ENCODE measurements at regions of chr1 and their contacts with region 1.

Region 1: GRCh38 chr1:27357281-27358037 is 9.3 kb downstream of the MAP3K6 start:
- DNase-seq: peak; percentile 73 to 94
- H3K4me3 ChIP-seq: peak overlapping the region in 3 of 4 experiments; percentile 13 to 34 (median 28); a peak in 4 of 8 replicates
- H3K27ac ChIP-seq: no peak overlapping the region
- H3K4me1 ChIP-seq: peaks cover 0 to 14% (median 7%) of the 10 kb centered on the region in 4 experiments; a peak in 6 of 7 replicates
- H3K27me3 ChIP-seq: peaks cover 12 to 47% (median 36%) of the 10 kb centered on the region in 4 experiments
- CTCF ChIP-seq: peak in 2 of 3 experiments; percentile 94 to 98; a peak in 3 of 4 replicates
- EP300 ChIP-seq: no peak; a peak in 1 of 3 replicates
- POLR2A ChIP-seq: no peak
- RAD21 ChIP-seq: peak; percentile 60 to 71

Region 2: GRCh38 chr1:27285274-27285660 is 72.2 kb before region 1 on chr1:
- CTCF ChIA-PET with region 1: no interaction called
- POLR2A ChIA-PET with region 1: no interaction called
- DNase-seq: no peak
- H3K4me3 ChIP-seq: no peak overlapping the region
- H3K27ac ChIP-seq: no peak overlapping the region
- H3K4me1 ChIP-seq: no peaks in the 10 kb centered on the region
- H3K27me3 ChIP-seq: no peaks in the 10 kb centered on the region
- CTCF ChIP-seq: no peak
- EP300 ChIP-seq: no peak
- POLR2A ChIP-seq: no peak
- RAD21 ChIP-seq: no peak

Region 3: DNA sequence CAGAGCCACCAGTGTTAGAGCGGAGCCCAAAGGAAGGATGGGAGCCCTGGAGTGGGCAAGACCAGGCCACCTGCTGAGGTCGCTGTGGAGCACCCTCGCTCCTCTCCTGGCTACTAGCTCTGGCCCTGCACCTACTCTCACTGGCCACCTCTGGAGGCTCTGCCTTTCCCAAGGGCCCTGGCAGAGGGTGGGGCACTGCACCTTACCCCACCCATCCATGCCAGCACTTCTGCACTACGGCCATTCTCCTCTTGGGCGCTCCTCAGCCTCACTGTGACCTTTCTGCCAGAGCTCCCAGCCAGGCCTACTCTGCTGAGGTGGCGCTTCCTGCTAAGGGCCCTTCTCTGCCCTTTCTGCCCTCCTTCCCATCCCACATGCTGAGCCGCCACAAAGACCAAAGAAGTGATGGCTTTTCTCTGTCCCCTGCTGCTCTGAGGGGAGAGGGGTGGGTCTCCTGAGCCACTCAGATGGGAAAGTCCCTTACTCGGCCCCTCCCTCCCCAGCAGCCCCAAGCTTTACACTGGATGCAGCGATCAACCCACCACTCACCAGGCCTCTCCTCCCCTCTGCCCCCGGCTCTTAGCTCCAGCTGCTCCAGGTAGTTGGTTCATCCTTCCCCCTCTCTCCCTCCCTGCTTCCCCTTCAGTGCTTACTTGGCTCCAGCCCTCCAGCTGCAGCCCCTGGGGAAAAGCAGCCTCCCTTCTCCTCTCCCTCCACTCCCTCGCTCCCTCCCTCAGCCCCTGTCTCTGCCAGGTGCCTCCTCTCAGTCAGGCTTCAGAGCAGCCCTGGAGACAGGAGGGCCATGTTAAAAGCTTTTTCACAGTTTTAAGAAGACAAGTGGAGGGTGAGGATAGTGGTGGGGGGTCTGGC is 50.3 kb before region 1 on chr1:
- CTCF ChIA-PET with region 1: interaction called, 238 read pairs
- POLR2A ChIA-PET with region 1: interaction called, 6 read pairs
- DNase-seq: peak in 1 of 2 experiments; percentile 76
- H3K4me3 ChIP-seq: peak overlapping the region in 2 of 4 experiments; percentile 23 to 39; a peak in 4 of 8 replicates
- H3K27ac ChIP-seq: peak overlapping the region; percentile 57; the same call in 1 of the 2 replicates
- H3K4me1 ChIP-seq: peaks cover 11 to 15% (median 13%) of the 10 kb centered on the region in 4 experiments
- H3K27me3 ChIP-seq: no peaks in the 10 kb centered on the region
- CTCF ChIP-seq: peak; percentile 33 to 57 (median 41)
- EP300 ChIP-seq: no peak
- POLR2A ChIP-seq: 0 out of 3 replicates have a peak, but pooled peaks of 1 of the 2 experiments have one; percentile 28
- RAD21 ChIP-seq: 0 out of 4 replicates have a peak, but pooled peaks of 1 of the 2 experiments have one; percentile 12

Region 4: GRCh38 chr1:27321813-27322577 is 35.5 kb before region 1 on chr1 and contains the start of gene TMEM222:
- CTCF ChIA-PET with region 1: interaction called, 26 read pairs
- POLR2A ChIA-PET with region 1: interaction called, 13 read pairs
- DNase-seq: peak; percentile 88 to 99
- H3K4me3 ChIP-seq: peak within 1 kb of the TSS; percentile 78 to 100 (median 98)
- H3K27ac ChIP-seq: peak within 1 kb of the TSS; percentile 86
- H3K4me1 ChIP-seq: 0 out of 7 replicates have a peak, but pooled peaks cover 0 to 8% (median 0%) of the 10 kb centered on the region in 4 experiments
- H3K27me3 ChIP-seq: no peaks in the 10 kb centered on the region; a peak in 2 of 7 replicates
- CTCF ChIP-seq: peak in 2 of 3 experiments; percentile 1 to 14; a peak in 2 of 4 replicates
- EP300 ChIP-seq: peak; percentile 16 to 83; a peak in 2 of 3 replicates
- POLR2A ChIP-seq: peak; percentile 69 to 87
- RAD21 ChIP-seq: peak; percentile 7 to 30; a peak in 3 of 4 replicates
- total RNA-seq, gene TMEM222: 25.1 and 27.0 TPM in 2 replicates

Region 5: GRCh38 chr1:27341525-27342252 is 15.8 kb before region 1 on chr1 and contains the start of gene SYTL1:
- CTCF ChIA-PET with region 1: interaction called, 56 read pairs
- POLR2A ChIA-PET with region 1: interaction called, 50 read pairs
- DNase-seq: peak in 1 of 2 experiments; percentile 73
- H3K4me3 ChIP-seq: peak within 1 kb of the TSS; percentile 16 to 64 (median 44)
- H3K27ac ChIP-seq: no peak within 1 kb of the TSS
- H3K4me1 ChIP-seq: peaks cover 0 to 25% (median 20%) of the 10 kb centered on the region in 4 experiments; a peak in 6 of 7 replicates
- H3K27me3 ChIP-seq: peaks cover 0 to 2% (median 0%) of the 10 kb centered on the region in 4 experiments; a peak in 1 of 7 replicates
- CTCF ChIP-seq: no peak
- EP300 ChIP-seq: no peak
- POLR2A ChIP-seq: no peak
- RAD21 ChIP-seq: no peak
- total RNA-seq, gene SYTL1: 6.4 and 8.8 TPM in 2 replicates

Region 6: GRCh38 chr1:27445177-27445936 is 87.9 kb after region 1 on chr1:
- CTCF ChIA-PET with region 1: no interaction called
- POLR2A ChIA-PET with region 1: no interaction called
- DNase-seq: no peak
- H3K4me3 ChIP-seq: no peak overlapping the region
- H3K27ac ChIP-seq: no peak overlapping the region
- H3K4me1 ChIP-seq: peaks cover 0 to 3% (median 0%) of the 10 kb centered on the region in 4 experiments; a peak in 1 of 7 replicates
- H3K27me3 ChIP-seq: no peaks in the 10 kb centered on the region
- CTCF ChIP-seq: no peak
- EP300 ChIP-seq: no peak
- POLR2A ChIP-seq: no peak
- RAD21 ChIP-seq: no peak

Region 7: DNA sequence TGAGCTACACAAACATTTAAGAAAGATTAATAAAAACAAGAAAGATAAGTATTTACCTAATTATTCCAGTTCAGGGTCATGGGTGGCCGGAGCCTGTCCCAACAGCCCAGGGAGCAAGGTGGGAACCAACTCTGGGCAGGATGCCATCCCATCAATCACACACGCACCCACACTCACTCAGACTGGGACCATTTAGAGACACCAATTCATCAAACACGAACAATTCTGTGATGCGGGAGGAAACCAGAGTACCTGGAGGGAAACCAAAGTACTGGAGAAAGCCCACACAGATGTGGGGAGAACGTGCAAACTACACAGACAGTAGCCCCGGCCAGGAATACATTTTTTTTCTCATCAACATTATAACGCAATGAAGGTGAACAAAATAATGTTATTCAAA is 116.3 kb after region 1 on chr1:
- CTCF ChIA-PET with region 1: no interaction called
- POLR2A ChIA-PET with region 1: no interaction called
- DNase-seq: no peak
- H3K4me3 ChIP-seq: no peak overlapping the region
- H3K27ac ChIP-seq: no peak overlapping the region
- H3K4me1 ChIP-seq: no peaks in the 10 kb centered on the region; a peak in 1 of 7 replicates
- H3K27me3 ChIP-seq: no peaks in the 10 kb centered on the region
- CTCF ChIP-seq: no peak
- EP300 ChIP-seq: no peak
- POLR2A ChIP-seq: no peak
- RAD21 ChIP-seq: no peak

Region 8: GRCh38 chr1:27525296-27526272 is 168.1 kb after region 1 on chr1:
- CTCF ChIA-PET with region 1: no interaction called
- POLR2A ChIA-PET with region 1: no interaction called
- DNase-seq: peak in 1 of 2 experiments; percentile 81
- H3K4me3 ChIP-seq: peak overlapping the region in 3 of 4 experiments; percentile 15 to 42 (median 34); a peak in 4 of 8 replicates
- H3K27ac ChIP-seq: 0 out of 2 replicates have a peak overlapping the region, but pooled peaks have one; percentile 43
- H3K4me1 ChIP-seq: peaks cover 12 to 56% (median 42%) of the 10 kb centered on the region in 4 experiments
- H3K27me3 ChIP-seq: no peaks in the 10 kb centered on the region
- CTCF ChIP-seq: no peak
- EP300 ChIP-seq: no peak
- POLR2A ChIP-seq: no peak
- RAD21 ChIP-seq: no peak; a peak in 1 of 4 replicates

Region 9: DNA sequence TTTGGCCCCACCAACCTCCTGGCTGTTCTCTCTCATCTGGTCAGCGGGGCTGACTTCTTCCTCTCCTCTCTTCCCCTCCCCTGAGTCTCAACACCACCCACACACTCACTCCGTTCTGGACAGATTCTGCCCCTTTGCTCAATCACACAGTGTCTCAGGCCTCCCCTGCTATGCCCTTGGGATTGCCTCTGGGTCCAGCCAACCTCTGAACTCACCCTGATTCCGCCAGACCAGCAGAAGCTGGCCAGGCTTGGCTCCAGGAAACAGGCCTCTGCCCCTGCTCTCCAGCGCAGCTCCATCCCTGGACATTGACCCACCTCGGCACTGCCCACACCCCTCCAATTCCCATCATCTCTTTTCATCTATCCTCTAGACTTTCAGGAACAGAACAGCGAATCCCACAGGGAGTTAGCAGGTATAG is 224.4 kb after region 1 on chr1:
- CTCF ChIA-PET with region 1: interaction called, 10 read pairs
- POLR2A ChIA-PET with region 1: no interaction called
- DNase-seq: no peak
- H3K4me3 ChIP-seq: no peak overlapping the region
- H3K27ac ChIP-seq: no peak overlapping the region
- H3K4me1 ChIP-seq: peaks cover 0 to 5% (median 1%) of the 10 kb centered on the region in 4 experiments; a peak in 6 of 7 replicates
- H3K27me3 ChIP-seq: no peaks in the 10 kb centered on the region
- CTCF ChIP-seq: no peak
- EP300 ChIP-seq: no peak
- POLR2A ChIP-seq: no peak
- RAD21 ChIP-seq: no peak

Measured in H1 (cell line).